A549 (cell line): ENCODE measurements at regions of chr2 and their contacts with region 1.

Region 1: DNA sequence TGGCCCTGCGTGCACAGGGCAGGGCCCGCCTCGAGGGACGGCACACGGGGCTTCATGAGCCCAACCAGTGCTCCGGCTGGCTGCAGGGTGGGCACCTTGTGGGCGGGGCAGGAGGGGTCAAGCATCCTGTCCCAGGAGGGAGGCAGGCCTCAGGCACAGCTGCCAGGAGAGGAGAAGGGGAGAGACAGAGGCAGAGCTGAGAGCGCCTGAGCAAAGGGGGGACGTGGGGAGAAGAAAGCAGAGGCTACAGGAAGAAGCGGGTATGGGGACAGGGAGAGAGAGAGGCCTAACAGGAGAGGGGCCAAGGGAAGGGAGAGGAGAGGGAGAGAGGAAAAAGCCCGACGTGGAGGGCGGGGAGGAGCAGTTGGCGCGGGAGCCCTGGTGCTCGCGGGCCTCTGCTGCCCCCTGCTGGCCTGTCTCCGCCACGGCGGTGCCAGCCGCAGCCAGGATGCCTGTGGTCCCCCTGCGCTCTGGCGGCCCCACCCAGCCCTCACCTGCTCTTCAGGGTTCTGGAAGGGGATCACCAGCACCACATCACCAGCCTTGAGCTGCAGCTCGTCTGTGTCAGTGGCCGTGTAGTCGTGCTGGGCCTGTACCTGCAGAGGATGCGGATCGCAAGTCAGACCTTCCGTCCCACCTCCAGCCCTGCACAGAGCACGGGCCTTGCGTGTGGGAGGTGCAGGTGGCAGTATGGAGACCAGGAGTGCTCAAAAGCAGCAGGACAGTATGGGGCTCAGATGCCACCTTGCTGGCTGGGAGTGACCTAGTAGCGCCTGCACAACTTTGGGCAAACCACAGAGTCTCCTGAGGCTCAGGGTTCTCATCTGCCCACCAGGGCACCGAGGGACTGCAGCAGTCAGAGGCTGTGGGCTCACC is 56.8 kb downstream of the BIN1 start:
- DNase-seq: peak; percentile 48 to 50
- ATAC-seq: peak; percentile 62 to 88
- H3K4me3 ChIP-seq: no peak overlapping the region
- H3K27ac ChIP-seq: peak overlapping the region in 1 of 2 experiments; percentile 69; a peak in 3 of 6 replicates
- H3K4me1 ChIP-seq: peaks cover 21% of the 10 kb centered on the region
- CTCF ChIP-seq: peak; percentile 88
- EP300 ChIP-seq: no peak
- POLR2A ChIP-seq: no peak
- RAD21 ChIP-seq: peak; percentile 72 to 86

Region 2: DNA sequence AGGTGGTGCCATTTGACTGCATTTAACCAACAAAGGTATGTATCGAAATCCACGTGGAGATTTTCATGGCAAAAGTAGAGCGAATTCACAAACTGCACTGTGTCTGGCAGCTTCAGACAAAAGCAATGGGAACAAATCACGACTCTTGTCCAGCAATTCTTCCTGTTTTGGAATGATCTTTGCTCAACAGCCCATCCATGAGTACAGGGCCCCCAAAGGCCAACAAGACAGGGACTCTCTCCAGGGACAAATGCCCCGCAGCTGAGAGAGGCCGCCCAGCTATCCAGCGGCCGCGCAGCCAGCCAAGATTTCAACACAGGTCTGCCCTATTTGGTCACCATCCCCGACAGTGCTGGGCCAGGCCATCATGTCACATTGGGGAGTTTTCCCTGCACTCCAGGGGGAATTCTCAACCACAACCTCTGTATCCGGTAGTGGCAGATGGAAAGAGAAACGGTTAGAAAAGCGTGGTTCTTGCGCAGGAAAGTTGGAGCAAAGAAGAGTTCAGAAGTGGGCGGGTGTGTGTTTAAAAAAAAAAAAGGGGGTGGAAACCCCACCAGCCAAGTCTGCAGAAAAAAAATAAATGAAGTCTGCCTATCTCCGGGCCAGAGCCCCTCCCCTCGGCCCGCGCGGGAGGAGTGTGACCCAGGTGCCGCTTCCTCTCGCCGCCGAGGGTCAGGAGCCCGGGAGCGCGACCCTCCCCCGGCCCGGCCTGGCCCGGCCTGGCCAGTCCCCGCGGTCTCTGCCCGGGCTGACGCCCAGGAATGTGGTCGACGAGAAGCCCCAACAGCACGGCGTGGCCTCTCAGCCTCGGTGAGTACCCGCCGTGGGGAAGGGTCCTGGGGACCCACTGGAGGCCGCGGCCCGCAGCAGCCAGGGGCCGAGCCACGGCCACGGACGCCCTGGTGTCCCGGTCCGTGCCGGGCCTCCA is 394.4 kb before region 1 on chr2 and contains the start of gene GYPC:
- CTCF ChIA-PET with region 1: no interaction called
- POLR2A ChIA-PET with region 1: no interaction called
- DNase-seq: no peak
- ATAC-seq: no peak; a peak in 1 of 6 replicates
- H3K4me3 ChIP-seq: no peak within 1 kb of the TSS
- H3K27ac ChIP-seq: no peak within 1 kb of the TSS
- H3K4me1 ChIP-seq: no peaks in the 10 kb centered on the region
- CTCF ChIP-seq: no peak
- EP300 ChIP-seq: no peak
- POLR2A ChIP-seq: no peak
- RAD21 ChIP-seq: no peak
- polyA plus RNA-seq, gene GYPC: not detected in 2 replicates

Region 3: GRCh38 chr2:126971481-126972278 is 78.5 kb before region 1 on chr2:
- CTCF ChIA-PET with region 1: interaction called, 16 read pairs
- POLR2A ChIA-PET with region 1: no interaction called
- DNase-seq: peak; percentile 61 to 69
- ATAC-seq: peak; percentile 81 to 94
- H3K4me3 ChIP-seq: peak overlapping the region; percentile 49
- H3K27ac ChIP-seq: peak overlapping the region; percentile 63 to 78; a peak in 5 of 6 replicates
- H3K4me1 ChIP-seq: 0 out of 3 replicates have a peak, but pooled peaks cover 3% of the 10 kb centered on the region
- CTCF ChIP-seq: peak; percentile 75
- EP300 ChIP-seq: no peak
- POLR2A ChIP-seq: no peak
- RAD21 ChIP-seq: peak; percentile 87 to 89

Region 4: DNA sequence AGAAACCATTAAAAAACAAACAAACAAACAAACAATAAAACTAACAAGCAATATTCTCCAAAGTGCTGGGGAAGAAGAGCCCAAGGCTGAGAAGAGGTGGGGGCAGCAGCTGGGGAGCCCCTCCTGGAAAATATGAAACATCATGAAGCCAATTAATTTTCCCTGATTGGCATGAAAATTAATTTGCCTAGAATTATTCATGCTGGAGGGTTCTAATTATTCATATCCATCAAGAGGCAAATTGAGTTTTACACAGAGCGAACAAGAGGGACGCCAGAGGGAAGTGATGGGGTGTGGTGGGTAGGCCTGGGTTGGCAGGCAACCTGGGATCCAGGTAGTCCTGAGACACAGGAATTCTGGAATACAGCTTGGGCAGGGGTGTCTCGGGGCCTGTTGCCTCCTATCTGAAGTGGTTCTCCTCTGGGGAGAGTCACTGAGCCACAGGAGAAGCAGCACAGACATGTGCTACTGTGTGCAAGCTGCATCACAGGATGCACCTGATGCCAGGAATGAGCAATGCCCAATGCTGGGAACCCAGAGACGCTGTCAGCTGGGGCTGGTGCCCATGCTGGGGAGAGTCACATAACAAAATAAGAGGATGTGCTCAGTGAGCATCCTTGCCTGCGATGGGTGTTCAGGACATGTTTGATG is 50.9 kb before region 1 on chr2:
- CTCF ChIA-PET with region 1: no interaction called
- POLR2A ChIA-PET with region 1: no interaction called
- DNase-seq: no peak
- ATAC-seq: no peak
- H3K4me3 ChIP-seq: no peak overlapping the region
- H3K27ac ChIP-seq: no peak overlapping the region
- H3K4me1 ChIP-seq: no peaks in the 10 kb centered on the region
- CTCF ChIP-seq: no peak
- EP300 ChIP-seq: no peak
- POLR2A ChIP-seq: no peak
- RAD21 ChIP-seq: no peak

Region 5: GRCh38 chr2:127032621-127033020 is 17.5 kb before region 1 on chr2:
- CTCF ChIA-PET with region 1: interaction called, 47 read pairs
- POLR2A ChIA-PET with region 1: no interaction called
- DNase-seq: no peak
- ATAC-seq: no peak
- H3K4me3 ChIP-seq: no peak overlapping the region
- H3K27ac ChIP-seq: no peak overlapping the region
- H3K4me1 ChIP-seq: no peaks in the 10 kb centered on the region
- CTCF ChIP-seq: no peak
- EP300 ChIP-seq: no peak
- POLR2A ChIP-seq: no peak
- RAD21 ChIP-seq: no peak

Region 6: GRCh38 chr2:127039387-127040031 is 10.7 kb before region 1 on chr2:
- CTCF ChIA-PET with region 1: interaction called, 47 read pairs
- POLR2A ChIA-PET with region 1: no interaction called
- DNase-seq: no peak
- ATAC-seq: no peak
- H3K4me3 ChIP-seq: no peak overlapping the region
- H3K27ac ChIP-seq: no peak overlapping the region
- H3K4me1 ChIP-seq: no peaks in the 10 kb centered on the region
- CTCF ChIP-seq: no peak
- EP300 ChIP-seq: no peak
- POLR2A ChIP-seq: no peak
- RAD21 ChIP-seq: no peak

Region 7: DNA sequence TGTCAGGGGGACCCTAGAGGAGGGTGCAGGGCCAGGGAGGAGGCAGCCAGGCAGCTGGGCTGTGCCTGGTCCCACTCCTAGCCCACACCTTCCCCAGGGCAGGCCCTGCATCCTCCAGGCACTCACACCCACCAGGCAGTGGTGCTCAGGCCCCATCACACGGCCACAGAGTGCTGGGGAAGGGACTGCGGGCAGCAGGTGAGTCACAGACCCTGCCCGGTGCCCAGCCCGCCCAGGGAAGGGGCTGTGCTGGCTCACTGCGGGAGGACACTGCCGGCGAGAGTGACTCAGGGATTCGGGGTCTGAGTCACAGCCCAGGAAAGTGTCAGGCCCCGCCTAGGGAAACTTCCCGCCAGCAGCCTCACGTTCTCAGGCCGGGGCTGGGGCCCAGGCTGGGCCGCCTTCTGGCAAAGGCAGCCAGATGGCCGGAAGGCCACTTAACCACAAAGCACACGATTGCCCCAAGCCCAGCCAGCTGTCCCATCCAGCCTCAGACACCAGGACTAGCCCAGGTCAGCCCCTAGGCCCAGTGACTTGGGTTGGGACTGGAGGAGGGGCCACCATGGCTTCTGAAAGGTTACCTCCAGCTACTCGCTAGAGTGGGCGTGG is 14.6 kb after region 1 on chr2:
- CTCF ChIA-PET with region 1: interaction called, 38 read pairs
- POLR2A ChIA-PET with region 1: no interaction called
- DNase-seq: peak; percentile 95 to 98
- ATAC-seq: peak; percentile 88 to 96
- H3K4me3 ChIP-seq: no peak overlapping the region
- H3K27ac ChIP-seq: peak overlapping the region; percentile 95 to 99
- H3K4me1 ChIP-seq: peaks cover 32% of the 10 kb centered on the region
- CTCF ChIP-seq: peak; percentile 39; the same call in 2 of the 3 replicates
- EP300 ChIP-seq: peak in 1 of 2 experiments; percentile 74; a peak in 1 of 5 replicates
- POLR2A ChIP-seq: peak; percentile 31
- RAD21 ChIP-seq: peak; percentile 57 to 75